MCF 10A (cell line): ENCODE measurements at regions of chr18 and their contacts with region 1.

Region 1: GRCh38 chr18:23416298-23416697 is 36.8 kb upstream of the RIOK3 start:
- DNase-seq: no peak
- H3K4me3 Mint-ChIP-seq: no peak overlapping the region
- H3K27ac Mint-ChIP-seq: no peak overlapping the region
- H3K4me1 Mint-ChIP-seq: no peaks in the 10 kb centered on the region
- H3K27me3 Mint-ChIP-seq: no peaks in the 10 kb centered on the region
- CTCF ChIP-seq: no peak

Region 2: GRCh38 chr18:23126376-23127056 is 289.8 kb before region 1 on chr18:
- CTCF ChIA-PET with region 1: interaction called, 25 read pairs
- POLR2A ChIA-PET with region 1: no interaction called
- intact Hi-C with region 1: loop called (anchors 1 kb)
- DNase-seq: no peak
- H3K4me3 Mint-ChIP-seq: no peak overlapping the region
- H3K27ac Mint-ChIP-seq: no peak overlapping the region
- H3K4me1 Mint-ChIP-seq: no peaks in the 10 kb centered on the region
- H3K27me3 Mint-ChIP-seq: no peaks in the 10 kb centered on the region
- CTCF ChIP-seq: no peak

Region 3: GRCh38 chr18:23365602-23366001 is 50.7 kb before region 1 on chr18:
- CTCF ChIA-PET with region 1: no interaction called
- POLR2A ChIA-PET with region 1: no interaction called
- intact Hi-C with region 1: no loop called
- DNase-seq: no peak
- H3K4me3 Mint-ChIP-seq: no peak overlapping the region
- H3K27ac Mint-ChIP-seq: no peak overlapping the region
- H3K4me1 Mint-ChIP-seq: no peaks in the 10 kb centered on the region
- H3K27me3 Mint-ChIP-seq: no peaks in the 10 kb centered on the region
- CTCF ChIP-seq: no peak

Region 4: GRCh38 chr18:23629444-23629946 is 213.2 kb after region 1 on chr18:
- CTCF ChIA-PET with region 1: no interaction called
- POLR2A ChIA-PET with region 1: no interaction called
- intact Hi-C with region 1: no loop called
- DNase-seq: no peak
- H3K4me3 Mint-ChIP-seq: no peak overlapping the region
- H3K27ac Mint-ChIP-seq: no peak overlapping the region
- H3K4me1 Mint-ChIP-seq: peaks cover 23% of the 10 kb centered on the region
- H3K27me3 Mint-ChIP-seq: no peaks in the 10 kb centered on the region
- CTCF ChIP-seq: no peak